ENCODE measurements at regions of chr12 and their contacts with region 1.

Region 1: DNA sequence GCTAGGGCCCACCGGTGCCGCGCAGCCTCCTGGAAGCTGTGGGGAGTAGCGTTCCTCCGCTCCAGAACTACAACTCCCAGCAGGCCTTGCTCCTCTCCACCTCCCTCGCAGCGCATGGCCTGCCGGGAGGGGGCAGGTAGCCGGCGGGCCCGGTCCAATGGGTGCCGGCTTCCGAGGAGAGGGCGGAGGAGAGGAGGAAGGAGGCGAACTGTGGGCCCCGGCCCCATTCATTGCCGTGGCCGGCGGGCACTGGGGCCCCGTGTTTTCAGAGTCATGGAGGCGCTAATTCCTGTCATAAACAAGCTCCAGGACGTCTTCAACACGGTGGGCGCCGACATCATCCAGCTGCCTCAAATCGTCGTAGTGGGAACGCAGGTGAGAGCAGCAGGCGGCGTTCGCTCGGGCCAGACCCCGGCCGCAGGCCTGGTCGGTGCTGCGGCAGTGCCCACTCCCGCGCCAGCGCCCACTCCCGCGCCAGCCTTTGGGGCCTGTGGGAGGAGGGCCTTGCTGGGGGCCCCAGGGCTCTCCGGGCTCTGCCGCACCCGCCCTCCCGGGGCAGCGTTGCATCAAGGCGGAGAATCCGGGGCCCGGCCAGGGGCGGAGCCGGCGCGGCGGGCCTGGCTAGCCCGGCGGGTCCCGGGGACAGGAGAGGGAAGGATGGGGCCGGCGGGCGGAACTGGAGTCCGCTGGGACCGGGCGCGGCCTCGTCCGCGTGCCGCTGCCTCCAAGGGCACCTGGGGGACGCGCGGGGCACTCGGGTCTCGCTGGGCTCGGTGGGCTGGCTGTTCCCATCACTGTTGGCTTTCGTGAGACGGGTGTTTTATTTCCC is at the start of gene DNM1L:
- DNase-seq: peak; percentile 88 to 91
- ATAC-seq: peak; percentile 96 to 97
- H3K4me3 ChIP-seq: peak within 1 kb of the TSS; percentile 77 to 93 (median 88)
- H3K27ac ChIP-seq: peak within 1 kb of the TSS; percentile 87 to 91 (median 90)
- H3K4me1 ChIP-seq: peaks cover 13 to 19% of the 10 kb centered on the region in 2 donors
- H3K27me3 ChIP-seq: no peaks in the 10 kb centered on the region
- CTCF ChIP-seq: peak in 1 of 5 experiments; percentile 9
- POLR2A ChIP-seq: peak; percentile 70 to 89
- total RNA-seq, gene DNM1L: 39.3 to 68.3 (median 43.8) TPM

Region 2: GRCh38 chr12:32377344-32378055 is 301.8 kb before region 1 on chr12:
- in situ Hi-C with region 1: loop called in 1 of 4 experiments (anchors 10 kb)
- intact Hi-C with region 1: no loop called
- DNase-seq: no peak
- ATAC-seq: no peak
- H3K4me3 ChIP-seq: no peak overlapping the region
- H3K27ac ChIP-seq: no peak overlapping the region
- H3K4me1 ChIP-seq: no peaks in the 10 kb centered on the region
- H3K27me3 ChIP-seq: no peaks in the 10 kb centered on the region
- CTCF ChIP-seq: no peak
- POLR2A ChIP-seq: no peak

Region 3: GRCh38 chr12:32399337-32400113 is 279.8 kb before region 1 on chr12 and contains the start of gene FGD4:
- in situ Hi-C with region 1: no loop called
- intact Hi-C with region 1: loop called (anchors 1 kb)
- DNase-seq: peak; percentile 87 to 91
- ATAC-seq: peak; percentile 93 to 94
- H3K4me3 ChIP-seq: peak within 1 kb of the TSS; percentile 65 to 95 (median 82)
- H3K27ac ChIP-seq: peak within 1 kb of the TSS; percentile 63 to 86 (median 86)
- H3K4me1 ChIP-seq: peaks cover 4 to 16% of the 10 kb centered on the region in 2 donors
- H3K27me3 ChIP-seq: no peaks in the 10 kb centered on the region
- CTCF ChIP-seq: peak in 4 of 5 experiments; percentile 19 to 54 (median 46)
- POLR2A ChIP-seq: peak; percentile 76 to 83
- total RNA-seq, gene FGD4: 18.8 to 60.3 (median 40.8) TPM

Region 4: DNA sequence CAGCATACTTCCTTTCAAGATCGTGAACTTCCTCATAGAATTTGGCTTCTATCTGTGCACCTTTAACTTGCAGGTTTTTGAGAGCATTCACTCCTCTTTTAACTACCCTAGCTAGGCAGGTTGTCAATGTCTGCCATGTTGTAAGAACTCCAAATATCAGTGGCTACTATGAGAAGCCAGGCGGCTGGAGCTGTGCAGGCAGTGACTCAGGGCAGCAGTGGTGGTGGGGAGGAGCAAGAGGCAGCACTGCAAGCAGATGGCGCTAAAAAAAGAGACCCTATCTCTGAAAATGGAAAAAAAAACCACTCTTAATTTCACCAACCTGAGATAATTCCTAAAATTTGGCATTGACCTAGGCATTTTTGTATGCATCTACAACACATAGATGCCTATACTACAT is 47.9 kb after region 1 on chr12:
- in situ Hi-C with region 1: no loop called
- intact Hi-C with region 1: no loop called
- DNase-seq: no peak
- ATAC-seq: no peak
- H3K4me3 ChIP-seq: no peak overlapping the region
- H3K27ac ChIP-seq: no peak overlapping the region
- H3K4me1 ChIP-seq: no peaks in the 10 kb centered on the region
- H3K27me3 ChIP-seq: no peaks in the 10 kb centered on the region
- CTCF ChIP-seq: no peak
- POLR2A ChIP-seq: no peak

Region 5: DNA sequence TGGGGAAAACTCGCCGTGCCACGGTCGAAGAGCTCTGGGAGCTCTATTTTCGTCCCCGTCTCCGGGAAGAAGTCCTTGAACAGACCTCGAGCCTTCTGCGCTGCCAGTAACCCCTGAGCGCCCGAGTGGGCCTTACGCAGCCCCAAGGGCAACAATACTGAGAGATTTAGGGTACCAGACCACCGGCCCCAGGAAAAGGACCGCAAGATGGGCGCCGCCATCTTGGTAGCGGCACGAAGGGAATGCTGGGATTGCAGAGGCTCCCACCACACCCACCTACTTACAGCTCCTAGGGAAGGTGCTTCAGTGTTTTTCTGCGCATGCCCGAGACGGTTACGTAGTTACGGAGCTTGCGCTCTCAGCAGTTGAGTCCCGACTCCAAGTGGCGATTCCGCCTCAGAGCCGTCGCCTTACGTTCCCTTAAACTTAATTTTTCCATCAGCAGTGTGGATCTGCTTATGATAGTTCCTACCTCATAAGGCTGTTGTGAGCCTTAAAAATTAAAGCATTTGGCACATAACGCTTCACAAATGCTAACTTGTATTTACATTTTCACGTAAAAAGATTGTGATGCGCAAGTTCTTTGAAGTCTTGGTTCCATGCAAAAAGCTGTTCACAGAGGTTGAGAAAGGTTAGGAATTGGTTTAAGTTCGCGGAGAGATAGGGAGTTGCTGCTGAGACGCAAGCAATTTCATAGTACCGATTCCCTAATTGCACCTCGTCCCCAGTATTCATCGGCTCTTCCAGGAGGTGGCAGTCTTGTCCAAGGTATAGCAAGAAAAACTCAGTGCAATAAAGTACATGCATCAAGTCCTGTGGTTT is 76.6 kb after region 1 on chr12 and contains the start of gene YARS2:
- in situ Hi-C with region 1: no loop called
- intact Hi-C with region 1: loop called (anchors 2 kb)
- DNase-seq: peak; percentile 95 to 96
- ATAC-seq: peak; percentile 99 to 100
- H3K4me3 ChIP-seq: peak within 1 kb of the TSS; percentile 80 to 100 (median 96)
- H3K27ac ChIP-seq: peak within 1 kb of the TSS; percentile 81 to 88 (median 84)
- H3K4me1 ChIP-seq: peaks cover 12 to 15% of the 10 kb centered on the region in 2 donors
- H3K27me3 ChIP-seq: no peaks in the 10 kb centered on the region
- CTCF ChIP-seq: peak; percentile 74 to 92 (median 79)
- POLR2A ChIP-seq: peak in 1 of 2 donors; percentile 35
- total RNA-seq, gene YARS2: 9.1 to 19.4 (median 13.9) TPM

Region 6: GRCh38 chr12:34402899-34403705 is 1723.8 kb after region 1 on chr12:
- in situ Hi-C with region 1: no loop called
- intact Hi-C with region 1: no loop called
- DNase-seq: peak in 1 of 2 donors; percentile 4
- ATAC-seq: no peak
- H3K4me3 ChIP-seq: no peak overlapping the region
- H3K27ac ChIP-seq: no peak overlapping the region
- H3K4me1 ChIP-seq: no peaks in the 10 kb centered on the region
- H3K27me3 ChIP-seq: no peaks in the 10 kb centered on the region
- CTCF ChIP-seq: no peak
- POLR2A ChIP-seq: no peak